CD4-positive, alpha-beta memory T cell (primary cell): ENCODE measurements at regions of chr4 and their contacts with region 1.

Region 1: GRCh38 chr4:122732329-122733026 is at the start of gene BBS12:
- DNase-seq: peak; percentile 99
- H3K4me3 ChIP-seq: peak within 1 kb of the TSS; percentile 96 to 98
- H3K4me3 Mint-ChIP-seq: peak within 1 kb of the TSS; percentile 97 to 99 (median 98)
- H3K27ac ChIP-seq: peak within 1 kb of the TSS; percentile 75
- H3K27ac Mint-ChIP-seq: peak within 1 kb of the TSS; percentile 95 to 100 (median 99)
- H3K4me1 ChIP-seq: peaks cover 19% of the 10 kb centered on the region
- H3K4me1 Mint-ChIP-seq: peaks cover 11 to 22% (median 17%) of the 10 kb centered on the region in 4 donors
- H3K27me3 ChIP-seq: no peaks in the 10 kb centered on the region
- H3K27me3 Mint-ChIP-seq: no peaks in the 10 kb centered on the region
- total RNA-seq, gene BBS12: 3.7 to 4.1 TPM

Region 2: DNA sequence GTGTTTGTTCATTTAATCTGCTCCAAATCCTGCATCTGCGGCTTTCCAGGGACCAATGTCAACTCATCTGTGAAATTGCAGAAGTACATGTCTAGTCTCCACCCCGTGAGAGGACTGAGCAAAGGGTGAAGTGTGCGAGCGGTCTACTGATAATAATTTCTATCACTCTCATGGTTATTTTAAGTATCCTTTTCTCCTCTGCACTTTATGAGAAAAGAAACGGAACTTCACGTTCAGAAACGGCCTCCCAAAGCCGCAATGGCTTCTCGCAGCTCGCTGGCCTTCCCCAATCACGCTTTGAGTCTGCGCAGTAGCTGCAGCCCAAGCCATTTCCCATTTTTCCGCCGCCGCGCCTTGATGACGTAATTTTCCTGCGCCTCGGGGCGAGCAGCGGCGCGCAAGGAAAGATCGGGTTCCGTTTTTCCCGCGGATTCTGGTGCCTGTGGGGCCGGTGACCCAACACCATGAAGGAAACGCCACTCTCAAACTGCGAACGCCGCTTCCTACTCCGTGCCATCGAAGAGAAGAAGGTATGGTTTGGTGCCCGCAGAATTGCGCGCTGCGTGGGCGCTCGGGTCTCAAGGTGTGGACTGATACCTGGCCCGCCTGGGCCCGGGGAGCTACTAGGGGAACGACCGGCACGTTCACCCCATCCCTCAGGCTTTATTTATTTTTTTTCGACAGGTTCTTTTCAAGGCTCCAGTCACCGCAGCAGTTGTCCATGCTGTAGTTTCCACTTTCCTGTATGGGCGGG is 931.3 kb before region 1 on chr4 and contains the start of gene EXOSC9:
- CTCF ChIA-PET with region 1: no interaction called
- POLR2A ChIA-PET with region 1: interaction called, 3 read pairs
- intact Hi-C with region 1: loop called (anchors 1 kb)
- DNase-seq: peak; percentile 93 to 96 (median 93)
- H3K4me3 ChIP-seq: peak within 1 kb of the TSS; percentile 74 to 98
- H3K4me3 Mint-ChIP-seq: peak within 1 kb of the TSS; percentile 92 to 100 (median 96)
- H3K27ac ChIP-seq: peak within 1 kb of the TSS; percentile 88
- H3K27ac Mint-ChIP-seq: peak within 1 kb of the TSS; percentile 94 to 100 (median 99)
- H3K4me1 ChIP-seq: peaks cover 50% of the 10 kb centered on the region
- H3K4me1 Mint-ChIP-seq: peaks cover 29 to 52% (median 39%) of the 10 kb centered on the region in 4 donors
- H3K27me3 ChIP-seq: no peaks in the 10 kb centered on the region
- H3K27me3 Mint-ChIP-seq: peaks cover 0 to 3% of the 10 kb centered on the region in 2 donors
- total RNA-seq, gene EXOSC9: 43.0 to 45.4 TPM

Region 3: GRCh38 chr4:122151982-122152710 is 580.3 kb before region 1 on chr4 and contains the start of gene BLTP1:
- CTCF ChIA-PET with region 1: no interaction called
- POLR2A ChIA-PET with region 1: no interaction called
- intact Hi-C with region 1: loop called (anchors 1 kb)
- DNase-seq: peak; percentile 85 to 89 (median 88)
- H3K4me3 ChIP-seq: peak within 1 kb of the TSS; percentile 73 to 92
- H3K4me3 Mint-ChIP-seq: peak within 1 kb of the TSS; percentile 92 to 100 (median 96)
- H3K27ac ChIP-seq: peak within 1 kb of the TSS; percentile 85
- H3K27ac Mint-ChIP-seq: peak within 1 kb of the TSS; percentile 92 to 100 (median 99)
- H3K4me1 ChIP-seq: peaks cover 63% of the 10 kb centered on the region
- H3K4me1 Mint-ChIP-seq: peaks cover 51 to 84% (median 64%) of the 10 kb centered on the region in 4 donors
- H3K27me3 ChIP-seq: no peaks in the 10 kb centered on the region
- H3K27me3 Mint-ChIP-seq: no peaks in the 10 kb centered on the region
- total RNA-seq, gene BLTP1: 83.9 to 87.5 TPM

Region 4: DNA sequence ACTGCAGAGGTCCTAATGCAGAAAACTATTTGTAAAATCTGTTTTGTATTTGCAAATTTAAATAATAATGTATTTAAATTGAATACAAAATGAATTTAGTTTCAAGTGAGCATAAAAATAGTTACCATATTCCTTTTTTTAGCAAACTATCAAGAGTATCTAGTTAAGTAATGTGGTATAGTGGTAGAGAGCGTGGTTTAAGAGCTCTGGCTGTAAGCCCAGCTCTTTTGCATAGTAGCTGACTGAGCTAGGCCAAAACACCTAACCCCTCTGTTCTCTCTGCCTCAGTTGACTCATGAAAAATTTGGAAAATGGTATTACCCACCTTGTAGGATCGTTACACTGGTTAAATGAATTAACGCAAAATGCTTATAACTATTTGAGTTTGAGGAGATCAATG is 371.7 kb before region 1 on chr4:
- CTCF ChIA-PET with region 1: no interaction called
- POLR2A ChIA-PET with region 1: no interaction called
- intact Hi-C with region 1: no loop called
- DNase-seq: no peak
- H3K4me3 ChIP-seq: no peak overlapping the region
- H3K4me3 Mint-ChIP-seq: no peak overlapping the region
- H3K27ac ChIP-seq: no peak overlapping the region
- H3K27ac Mint-ChIP-seq: peak overlapping the region in 1 of 7 donors; percentile 14
- H3K4me1 ChIP-seq: peaks cover 13% of the 10 kb centered on the region
- H3K4me1 Mint-ChIP-seq: peaks cover 5 to 17% (median 8%) of the 10 kb centered on the region in 4 donors
- H3K27me3 ChIP-seq: no peaks in the 10 kb centered on the region
- H3K27me3 Mint-ChIP-seq: no peaks in the 10 kb centered on the region

Region 5: DNA sequence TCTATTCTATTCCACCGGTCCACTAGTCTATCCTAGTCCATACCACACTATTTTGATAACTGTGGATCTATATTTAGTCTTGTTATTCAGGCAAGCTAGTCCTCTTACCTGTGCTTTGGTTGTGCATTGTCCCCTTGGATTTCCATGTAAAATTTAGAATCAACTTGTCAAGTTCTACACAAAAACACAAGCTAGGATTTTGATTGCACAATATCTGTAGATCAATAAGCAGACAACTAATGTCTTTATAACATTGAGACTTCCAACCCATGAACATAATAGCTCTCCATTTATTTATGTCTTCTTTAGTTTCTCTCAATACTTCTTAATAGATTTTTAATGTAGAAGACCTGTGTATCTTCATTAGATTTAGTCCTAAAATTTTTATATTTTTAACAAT is 10.2 kb before region 1 on chr4:
- CTCF ChIA-PET with region 1: interaction called, 37 read pairs
- POLR2A ChIA-PET with region 1: interaction called, 4 read pairs
- intact Hi-C with region 1: no loop called
- DNase-seq: no peak
- H3K4me3 ChIP-seq: no peak overlapping the region
- H3K4me3 Mint-ChIP-seq: no peak overlapping the region
- H3K27ac ChIP-seq: no peak overlapping the region
- H3K27ac Mint-ChIP-seq: no peak overlapping the region
- H3K4me1 ChIP-seq: no peaks in the 10 kb centered on the region
- H3K4me1 Mint-ChIP-seq: no peaks in the 10 kb centered on the region
- H3K27me3 ChIP-seq: no peaks in the 10 kb centered on the region
- H3K27me3 Mint-ChIP-seq: peaks cover 0 to 15% of the 10 kb centered on the region in 2 donors

Region 6: GRCh38 chr4:122758033-122758432 is 25.6 kb after region 1 on chr4:
- CTCF ChIA-PET with region 1: interaction called, 15 read pairs
- POLR2A ChIA-PET with region 1: no interaction called
- intact Hi-C with region 1: no loop called
- DNase-seq: peak in 4 of 5 donors; percentile 26 to 39 (median 31)
- H3K4me3 ChIP-seq: no peak overlapping the region
- H3K4me3 Mint-ChIP-seq: no peak overlapping the region
- H3K27ac ChIP-seq: no peak overlapping the region
- H3K27ac Mint-ChIP-seq: no peak overlapping the region
- H3K4me1 ChIP-seq: peaks cover 14% of the 10 kb centered on the region
- H3K4me1 Mint-ChIP-seq: peaks cover 10 to 15% (median 10%) of the 10 kb centered on the region in 4 donors
- H3K27me3 ChIP-seq: no peaks in the 10 kb centered on the region
- H3K27me3 Mint-ChIP-seq: peaks cover 7 to 8% of the 10 kb centered on the region in 2 donors

Region 7: GRCh38 chr4:122914292-122914904 is 181.9 kb after region 1 on chr4:
- CTCF ChIA-PET with region 1: interaction called, 17 read pairs
- POLR2A ChIA-PET with region 1: interaction called, 3 read pairs
- intact Hi-C with region 1: no loop called
- DNase-seq: peak in 3 of 5 donors; percentile 27 to 49 (median 28)
- H3K4me3 ChIP-seq: no peak overlapping the region
- H3K4me3 Mint-ChIP-seq: no peak overlapping the region
- H3K27ac ChIP-seq: no peak overlapping the region
- H3K27ac Mint-ChIP-seq: peak overlapping the region in 1 of 7 donors; percentile 19
- H3K4me1 ChIP-seq: no peaks in the 10 kb centered on the region
- H3K4me1 Mint-ChIP-seq: peaks cover 0 to 2% (median 0%) of the 10 kb centered on the region in 4 donors
- H3K27me3 ChIP-seq: no peaks in the 10 kb centered on the region
- H3K27me3 Mint-ChIP-seq: no peaks in the 10 kb centered on the region

Region 8: GRCh38 chr4:123017636-123018395 is 285.3 kb after region 1 on chr4:
- CTCF ChIA-PET with region 1: no interaction called
- POLR2A ChIA-PET with region 1: no interaction called
- intact Hi-C with region 1: no loop called
- DNase-seq: no peak
- H3K4me3 ChIP-seq: no peak overlapping the region
- H3K4me3 Mint-ChIP-seq: no peak overlapping the region
- H3K27ac ChIP-seq: no peak overlapping the region
- H3K27ac Mint-ChIP-seq: peak overlapping the region in 2 of 7 donors; percentile 6 to 28
- H3K4me1 ChIP-seq: no peaks in the 10 kb centered on the region
- H3K4me1 Mint-ChIP-seq: no peaks in the 10 kb centered on the region
- H3K27me3 ChIP-seq: no peaks in the 10 kb centered on the region
- H3K27me3 Mint-ChIP-seq: no peaks in the 10 kb centered on the region